Activated CD4-positive, alpha-beta memory T cell treated with anti-CD3 and anti-CD28 coated beads, Interleukin-2, amount 10 ng/mL, durations not matched to agents 7 days and 5 days (primary cell): ENCODE measurements at regions of chr11 and their contacts with region 1.

Region 1: GRCh38 chr11:34086554-34087283 is 18.7 kb upstream of the NAT10 start:
- DNase-seq: no peak
- H3K4me3 Mint-ChIP-seq: peak overlapping the region; percentile 45
- H3K27ac Mint-ChIP-seq: peak overlapping the region; percentile 92
- H3K4me1 Mint-ChIP-seq: peaks cover 26% of the 10 kb centered on the region
- H3K27me3 Mint-ChIP-seq: no peaks in the 10 kb centered on the region

Region 2: GRCh38 chr11:34075178-34075820 is 11.4 kb before region 1 on chr11:
- CTCF ChIA-PET with region 1: interaction called, 4 read pairs
- POLR2A ChIA-PET with region 1: interaction called, 10 read pairs
- DNase-seq: no peak
- H3K4me3 Mint-ChIP-seq: no peak overlapping the region
- H3K27ac Mint-ChIP-seq: peak overlapping the region; percentile 50
- H3K4me1 Mint-ChIP-seq: peaks cover 48% of the 10 kb centered on the region
- H3K27me3 Mint-ChIP-seq: no peaks in the 10 kb centered on the region

Region 3: GRCh38 chr11:34438529-34439507 is 352.1 kb after region 1 on chr11 and contains the start of gene CAT:
- CTCF ChIA-PET with region 1: no interaction called
- POLR2A ChIA-PET with region 1: no interaction called
- DNase-seq: peak; percentile 98
- H3K4me3 Mint-ChIP-seq: peak within 1 kb of the TSS; percentile 94
- H3K27ac Mint-ChIP-seq: peak within 1 kb of the TSS; percentile 77
- H3K4me1 Mint-ChIP-seq: peaks cover 29% of the 10 kb centered on the region
- H3K27me3 Mint-ChIP-seq: no peaks in the 10 kb centered on the region
- total RNA-seq, gene CAT: 32.5 to 34.3 TPM